AG04450 (cell line): ENCODE measurements at regions of chr1 and their contacts with region 1.

Region 1: DNA sequence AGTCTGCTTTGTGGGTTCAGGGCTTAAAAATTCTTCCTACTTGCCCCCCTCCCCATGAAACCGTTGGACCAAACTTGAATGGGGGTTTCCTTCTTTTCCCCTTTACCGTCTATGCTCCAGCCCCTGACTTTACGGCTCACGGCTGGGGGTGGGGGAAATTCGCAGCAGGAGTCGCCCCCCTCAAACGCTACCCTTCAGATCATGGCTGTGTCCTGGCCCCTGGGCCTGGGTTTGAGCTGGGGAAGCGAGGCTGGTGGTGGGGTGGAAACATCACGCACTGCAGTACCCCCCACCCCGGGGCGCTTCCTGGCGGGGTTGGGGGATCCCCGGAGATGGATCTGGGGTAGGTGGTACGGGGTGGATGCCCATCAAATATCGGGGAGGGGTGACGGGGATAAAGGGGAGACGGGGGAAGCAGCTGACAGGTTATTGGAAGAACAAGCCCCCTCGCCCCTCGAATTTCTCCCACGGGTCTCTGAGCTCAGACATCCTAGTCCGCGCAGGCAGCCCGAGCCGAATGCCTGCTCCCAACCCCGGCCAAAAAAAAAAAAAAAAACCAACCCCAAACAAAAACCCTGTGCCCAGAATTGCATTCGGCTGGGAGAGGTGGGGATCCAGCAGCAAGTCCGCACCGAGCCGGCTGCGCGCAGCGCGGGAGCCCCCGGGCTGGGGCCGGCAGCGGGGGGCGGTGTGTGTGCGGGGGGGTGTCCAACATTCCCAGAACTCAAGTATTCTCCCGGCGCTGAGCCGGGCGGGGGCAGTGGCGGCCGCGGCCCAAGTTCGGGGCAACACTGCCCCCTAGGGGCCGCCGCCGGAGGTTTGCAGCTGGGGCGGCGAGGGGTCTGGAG is 59.0 kb upstream of the ACOT11 start:
- DNase-seq: peak; percentile 10
- H3K4me3 ChIP-seq: peak overlapping the region; percentile 56
- H3K27ac ChIP-seq: peak overlapping the region; percentile 70
- H3K27me3 ChIP-seq: no peaks in the 10 kb centered on the region
- CTCF ChIP-seq: peak; percentile 85

Region 2: DNA sequence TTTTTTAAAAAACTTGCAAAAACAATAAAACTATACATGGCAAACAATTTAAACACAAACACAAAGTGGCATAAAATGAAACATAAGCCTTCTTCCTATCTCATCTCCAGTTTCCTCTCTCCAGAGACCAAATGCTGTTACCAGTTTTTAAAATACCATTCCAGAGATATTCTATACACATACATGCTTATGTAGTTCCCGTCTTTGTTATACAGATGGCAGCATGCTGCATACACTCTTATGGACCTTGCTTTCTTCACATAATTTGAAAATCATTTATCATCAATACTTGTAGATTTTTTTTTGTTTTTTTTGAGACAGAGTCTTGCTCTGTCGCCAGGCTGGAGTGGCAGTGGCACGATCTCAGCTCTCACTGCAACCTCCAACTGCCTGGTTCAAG is 535.9 kb before region 1 on chr1:
- CTCF ChIA-PET with region 1: interaction called, 11 read pairs
- POLR2A ChIA-PET with region 1: no interaction called
- DNase-seq: no peak
- H3K4me3 ChIP-seq: no peak overlapping the region
- H3K27ac ChIP-seq: no peak overlapping the region
- H3K27me3 ChIP-seq: no peaks in the 10 kb centered on the region
- CTCF ChIP-seq: no peak

Region 3: DNA sequence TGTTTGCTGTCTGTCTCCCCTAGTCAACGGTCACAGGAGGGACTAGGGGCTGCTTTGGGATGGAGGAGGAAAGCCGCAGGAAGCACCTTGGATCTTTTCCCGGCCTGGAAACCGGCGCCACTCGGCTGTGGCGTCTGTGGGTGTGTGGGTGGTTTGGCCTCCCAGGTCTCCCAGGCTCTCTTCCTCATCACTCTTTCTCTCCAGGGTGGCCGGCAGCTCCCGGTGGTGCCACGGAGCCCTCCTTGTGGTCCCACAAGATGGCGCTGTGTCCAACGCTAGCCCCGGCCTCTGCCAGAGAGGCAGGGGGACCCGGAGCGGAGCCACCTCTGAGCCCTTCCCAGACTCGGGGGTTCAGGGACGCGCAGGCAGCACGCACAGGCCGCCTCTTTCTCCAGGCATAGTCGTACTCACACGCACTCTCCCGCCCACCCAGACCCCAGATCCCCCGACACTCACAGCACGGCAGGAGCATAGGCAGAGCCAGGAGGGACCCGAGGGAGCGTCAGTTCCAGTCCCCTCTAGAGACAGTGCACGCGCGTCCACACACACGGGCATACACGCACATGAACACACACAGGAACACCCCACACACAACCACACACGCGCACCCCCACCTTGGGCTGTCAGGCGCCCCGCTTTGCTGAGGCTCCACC is 367.4 kb before region 1 on chr1:
- CTCF ChIA-PET with region 1: interaction called, 35 read pairs
- POLR2A ChIA-PET with region 1: interaction called, 4 read pairs
- DNase-seq: peak; percentile 37
- H3K4me3 ChIP-seq: peak overlapping the region; percentile 34; the same call in 1 of the 2 replicates
- H3K27ac ChIP-seq: no peak overlapping the region
- H3K27me3 ChIP-seq: peaks cover 6% of the 10 kb centered on the region
- CTCF ChIP-seq: peak; percentile 78

Region 4: GRCh38 chr1:54220004-54220811 is 268.8 kb before region 1 on chr1:
- CTCF ChIA-PET with region 1: interaction called, 17 read pairs
- POLR2A ChIA-PET with region 1: no interaction called
- DNase-seq: no peak
- H3K4me3 ChIP-seq: no peak overlapping the region
- H3K27ac ChIP-seq: peak overlapping the region; percentile 75
- H3K27me3 ChIP-seq: no peaks in the 10 kb centered on the region
- CTCF ChIP-seq: no peak

Region 5: DNA sequence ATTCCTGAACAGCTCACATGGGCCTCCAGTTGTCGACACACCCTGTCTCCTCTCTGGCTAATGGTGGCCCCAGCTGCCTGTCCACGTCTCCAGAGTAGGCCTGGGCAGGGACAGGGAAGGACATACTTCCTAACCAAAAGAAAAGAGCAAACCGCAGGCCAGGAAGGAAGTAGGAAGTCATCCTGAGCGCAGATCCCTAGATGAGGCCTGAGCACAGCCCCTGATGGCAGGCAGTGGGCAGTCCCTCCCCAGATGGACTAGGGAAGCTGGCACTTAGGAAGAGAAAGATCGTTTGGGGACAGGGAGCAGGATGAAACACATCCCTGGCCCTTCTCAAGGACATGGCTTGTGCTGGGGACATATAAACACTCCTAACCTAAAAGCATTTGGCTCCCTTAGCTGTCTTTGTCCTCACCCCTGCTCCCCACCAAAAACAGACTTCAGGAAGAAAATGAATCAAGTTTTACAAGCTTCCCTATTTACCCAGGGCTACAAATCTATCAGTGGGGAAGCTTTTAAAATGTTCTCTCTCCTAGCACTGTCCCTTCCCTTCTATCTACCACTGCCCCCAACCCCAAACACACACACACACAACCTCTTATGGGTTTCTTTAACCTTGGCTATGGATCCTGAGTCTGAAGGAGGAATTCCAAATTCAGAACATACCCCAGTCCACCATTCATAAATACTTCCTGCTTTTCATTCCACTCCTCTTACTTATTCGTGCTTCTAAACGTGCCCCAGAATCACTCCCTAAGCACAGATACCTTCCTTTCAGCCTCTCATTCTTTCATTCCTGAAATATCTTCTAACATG is 103.9 kb before region 1 on chr1:
- CTCF ChIA-PET with region 1: interaction called, 13 read pairs
- POLR2A ChIA-PET with region 1: no interaction called
- DNase-seq: peak; percentile 4
- H3K4me3 ChIP-seq: no peak overlapping the region
- H3K27ac ChIP-seq: peak overlapping the region; percentile 42
- H3K27me3 ChIP-seq: no peaks in the 10 kb centered on the region
- CTCF ChIP-seq: no peak

Region 6: DNA sequence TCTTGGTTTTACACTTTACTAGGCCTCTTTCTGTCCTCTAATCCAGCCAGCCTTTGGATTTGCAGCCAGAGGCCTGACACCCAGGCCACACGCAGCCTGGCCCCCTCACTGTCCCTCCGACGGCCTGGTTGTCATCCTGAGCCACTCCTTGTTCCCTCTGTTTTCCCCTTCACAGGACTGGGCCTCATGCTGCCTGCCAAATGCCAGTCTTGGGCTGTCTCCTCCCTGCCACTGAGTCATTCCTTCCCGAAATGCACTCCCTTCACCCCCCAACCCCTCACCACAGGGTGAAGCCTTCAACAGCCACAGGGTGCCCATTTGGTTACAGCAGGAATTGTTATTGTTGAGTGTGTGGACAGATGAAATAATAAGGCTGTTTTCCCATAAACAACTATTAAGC is 80.3 kb after region 1 on chr1:
- CTCF ChIA-PET with region 1: interaction called, 12 read pairs
- POLR2A ChIA-PET with region 1: no interaction called
- DNase-seq: no peak
- H3K4me3 ChIP-seq: no peak overlapping the region
- H3K27ac ChIP-seq: no peak overlapping the region
- H3K27me3 ChIP-seq: peaks cover 4% of the 10 kb centered on the region
- CTCF ChIP-seq: no peak